Gastrocnemius medialis (tissue), 4 donors: ENCODE measurements at regions of chr17 and their contacts with region 1.

Region 1: DNA sequence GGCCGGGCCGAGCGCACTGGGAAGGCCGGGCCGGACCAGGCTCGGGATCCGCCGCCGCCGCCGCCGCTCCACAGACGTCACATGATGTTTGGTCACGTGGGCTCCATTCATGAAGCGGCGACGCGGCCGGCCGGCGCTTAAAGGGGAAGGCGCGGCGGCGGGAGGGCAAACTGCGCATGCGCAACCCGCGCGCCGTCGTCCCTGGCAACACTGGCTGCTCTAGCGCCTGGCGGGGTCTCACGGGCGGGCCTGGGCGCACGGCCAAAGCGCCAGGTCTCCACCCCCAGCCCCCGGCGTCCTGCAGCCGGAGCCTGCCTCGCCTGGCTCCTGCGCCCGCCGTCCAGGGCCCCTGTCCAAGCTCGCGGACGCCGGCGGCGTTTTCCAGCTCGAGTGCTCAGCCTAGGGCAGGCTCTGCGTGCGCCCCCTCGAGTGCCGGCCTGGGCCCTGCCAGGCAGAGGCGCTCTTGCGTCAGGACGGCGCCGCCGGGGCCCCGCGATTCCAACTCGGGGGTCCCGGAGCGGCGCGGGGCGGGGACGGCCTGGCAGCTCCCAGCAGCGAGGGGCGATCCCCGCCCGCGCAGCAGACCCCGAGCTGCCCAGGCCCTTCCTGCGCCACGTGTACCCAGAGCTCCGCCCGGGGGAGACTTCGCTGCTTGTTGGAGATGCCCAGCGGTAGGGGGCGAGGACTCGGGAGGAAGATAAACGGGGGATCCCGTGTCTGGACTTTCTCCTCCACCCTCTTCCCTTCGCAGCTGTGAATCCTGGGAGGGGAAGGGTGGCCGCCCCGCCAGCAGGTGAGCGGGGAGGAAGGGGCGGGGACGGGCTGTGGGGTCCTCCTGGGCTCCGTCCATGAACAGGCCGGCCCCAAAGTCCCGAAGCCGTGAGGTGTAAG is at the start of gene MAFG:
- DNase-seq: peak; percentile 82 to 86
- ATAC-seq: peak; percentile 55 to 59
- H3K4me3 ChIP-seq: peak within 1 kb of the TSS; percentile 68 to 89 (median 77)
- H3K27ac ChIP-seq: peak within 1 kb of the TSS; percentile 90 to 98 (median 93)
- H3K4me1 ChIP-seq: peaks cover 38 to 40% of the 10 kb centered on the region in 2 donors
- H3K27me3 ChIP-seq: peaks cover 0 to 3% (median 0%) of the 10 kb centered on the region in 3 donors
- CTCF ChIP-seq: peak in 4 of 5 experiments; percentile 1 to 20 (median 19)
- POLR2A ChIP-seq: peak; percentile 92 to 95
- total RNA-seq, gene MAFG: 37.1 to 65.5 (median 51.9) TPM

Region 2: DNA sequence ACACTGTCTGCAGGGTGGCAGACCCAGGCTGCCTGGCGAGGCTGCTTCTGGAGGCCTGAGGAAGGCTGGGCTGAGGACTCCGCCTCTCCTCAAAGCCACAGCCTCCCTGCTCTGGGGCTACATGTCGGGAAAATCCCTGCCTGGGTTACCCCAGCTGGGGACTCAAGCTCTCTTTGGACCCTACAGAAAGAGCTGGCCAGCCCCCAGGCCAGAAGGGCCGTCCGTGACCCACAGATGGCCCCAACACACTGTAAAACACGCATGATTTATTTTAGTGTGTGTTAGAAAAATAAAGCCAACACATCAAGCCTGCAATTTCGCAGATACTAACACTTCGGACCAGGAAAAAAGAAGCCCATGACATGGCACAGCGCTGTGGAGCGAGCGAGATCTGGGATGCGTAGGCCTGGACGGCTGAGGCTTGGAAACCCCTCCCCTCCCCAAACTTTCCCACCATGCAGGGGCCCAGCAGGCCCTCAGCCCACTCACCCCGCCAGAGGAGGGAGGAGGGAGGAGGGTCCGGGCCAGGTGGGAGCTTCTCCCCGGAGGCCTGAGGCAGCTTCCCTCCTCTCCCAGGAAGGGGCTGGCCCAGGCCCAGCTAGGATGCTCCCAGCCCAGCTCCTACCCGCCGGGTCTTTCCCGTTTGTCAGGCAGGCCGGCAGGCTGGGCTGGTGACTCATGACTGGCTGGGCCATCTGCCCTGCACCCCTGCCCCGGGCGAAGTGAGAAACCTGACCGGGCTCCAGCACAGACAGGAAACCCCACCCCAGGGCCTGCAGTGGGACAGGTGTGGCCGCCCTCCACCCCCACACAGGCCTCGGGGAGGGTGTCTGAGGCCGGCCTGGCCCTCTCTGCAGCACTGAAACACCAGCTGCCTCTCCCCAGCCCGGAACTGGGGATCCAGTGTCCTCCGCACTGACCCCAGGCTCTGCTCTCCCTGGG is 598.6 kb before region 1 on chr17:
- in situ Hi-C with region 1: no loop called
- intact Hi-C with region 1: loop called (anchors 10 kb)
- DNase-seq: peak; percentile 97 to 99
- ATAC-seq: peak; percentile 37 to 44
- H3K4me3 ChIP-seq: peak overlapping the region; percentile 2 to 43 (median 34)
- H3K27ac ChIP-seq: peak overlapping the region; percentile 90 to 98 (median 96)
- H3K4me1 ChIP-seq: peaks cover 54 to 62% of the 10 kb centered on the region in 2 donors
- H3K27me3 ChIP-seq: no peaks in the 10 kb centered on the region
- CTCF ChIP-seq: no peak
- POLR2A ChIP-seq: peak; percentile 63 to 76

Region 3: DNA sequence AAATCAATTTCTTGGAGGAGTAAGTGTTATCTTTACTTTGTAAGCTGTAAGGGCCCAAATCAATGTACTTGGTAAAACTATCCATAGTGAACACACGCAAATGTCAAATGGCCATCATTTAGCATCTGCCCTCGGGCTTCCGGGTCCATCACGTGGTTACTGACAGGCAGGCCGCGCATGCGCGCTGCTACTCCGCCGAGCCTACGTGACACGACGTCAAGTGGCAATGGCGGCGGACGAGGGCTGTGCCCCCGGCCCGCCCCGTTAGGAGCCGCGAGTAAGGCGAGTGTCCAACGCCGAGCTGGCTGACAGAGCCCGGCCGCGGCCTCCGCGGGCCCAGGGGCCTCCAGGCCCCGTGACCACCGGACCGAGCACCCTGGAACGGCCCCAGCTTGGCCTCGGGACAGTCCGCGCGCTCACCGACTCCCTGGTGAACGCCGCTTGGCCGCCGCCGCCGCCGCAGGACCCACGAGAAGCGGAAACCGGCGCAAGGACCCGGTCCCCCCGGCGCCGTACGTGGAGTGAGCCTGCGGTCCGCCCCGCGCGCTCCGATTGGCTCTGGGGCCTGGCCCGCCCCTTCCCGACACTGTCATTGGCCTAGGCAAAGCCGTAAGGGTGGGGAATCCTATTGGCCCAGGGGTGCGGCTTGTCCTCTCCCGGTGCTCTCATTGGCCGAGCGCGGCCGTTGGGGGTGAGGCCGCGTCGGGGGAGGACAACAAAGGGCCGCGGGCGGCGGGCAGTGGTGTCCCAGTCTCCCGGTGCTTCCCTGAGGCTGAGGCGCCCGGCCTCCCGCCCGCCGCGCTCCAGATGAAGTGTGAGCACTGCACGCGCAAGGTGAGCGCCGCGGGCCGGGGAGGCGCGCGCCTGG is 530.3 kb after region 1 on chr17 and contains the start of gene NARF:
- in situ Hi-C with region 1: no loop called
- intact Hi-C with region 1: loop called (anchors 10 kb)
- DNase-seq: peak; percentile 99
- ATAC-seq: peak; percentile 92 to 94
- H3K4me3 ChIP-seq: peak within 1 kb of the TSS; percentile 75 to 98 (median 80)
- H3K27ac ChIP-seq: peak within 1 kb of the TSS; percentile 99 to 100 (median 100)
- H3K4me1 ChIP-seq: peaks cover 16 to 21% of the 10 kb centered on the region in 2 donors
- H3K27me3 ChIP-seq: no peaks in the 10 kb centered on the region
- CTCF ChIP-seq: no peak
- POLR2A ChIP-seq: peak; percentile 99 to 100
- total RNA-seq, gene NARF: 29.6 to 63.4 (median 49.0) TPM